ENCODE measurements at regions of chr6 and their contacts with region 1.

Region 1: DNA sequence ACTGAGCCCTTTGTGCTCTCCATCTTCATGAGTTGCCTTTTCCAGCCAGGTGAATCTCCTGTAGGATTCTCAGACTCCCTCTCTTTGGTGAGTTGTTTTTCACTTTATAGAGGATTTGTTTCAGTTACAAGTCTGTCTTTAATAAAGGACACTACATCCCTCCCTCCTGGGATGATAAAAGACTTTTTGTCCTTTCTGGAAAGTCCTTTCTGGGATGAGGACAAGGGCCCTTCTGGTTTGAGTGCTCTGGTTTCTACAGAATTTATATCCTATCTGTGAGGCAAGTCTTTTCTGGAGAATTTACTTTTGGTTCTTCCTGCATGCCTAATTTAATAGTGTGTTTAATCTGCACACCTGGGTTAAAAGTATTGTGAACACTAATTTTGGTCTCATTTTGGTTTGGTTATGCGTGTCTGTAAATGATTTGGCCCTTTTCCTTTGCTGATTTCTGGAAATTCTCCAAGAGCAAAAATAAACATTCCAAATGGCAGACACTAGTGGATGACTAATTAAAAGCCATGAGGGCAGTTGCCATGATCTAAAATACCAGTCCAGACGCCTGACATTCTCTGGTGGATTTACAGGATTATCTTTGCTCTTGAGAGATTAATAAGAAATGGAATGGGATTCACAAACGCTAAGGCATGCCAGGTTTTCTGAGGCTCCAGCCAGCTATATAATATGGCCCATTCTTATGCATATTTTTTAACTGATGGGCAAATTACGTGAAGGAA is 44.8 kb downstream of the TCP11 start:
- DNase-seq: no peak
- H3K4me3 ChIP-seq: no peak overlapping the region
- H3K27ac ChIP-seq: peak overlapping the region in 31 of 59 donors; percentile 2 to 60 (median 24)
- H3K27me3 ChIP-seq: no peaks in the 10 kb centered on the region
- CTCF ChIP-seq: no peak

Region 2: DNA sequence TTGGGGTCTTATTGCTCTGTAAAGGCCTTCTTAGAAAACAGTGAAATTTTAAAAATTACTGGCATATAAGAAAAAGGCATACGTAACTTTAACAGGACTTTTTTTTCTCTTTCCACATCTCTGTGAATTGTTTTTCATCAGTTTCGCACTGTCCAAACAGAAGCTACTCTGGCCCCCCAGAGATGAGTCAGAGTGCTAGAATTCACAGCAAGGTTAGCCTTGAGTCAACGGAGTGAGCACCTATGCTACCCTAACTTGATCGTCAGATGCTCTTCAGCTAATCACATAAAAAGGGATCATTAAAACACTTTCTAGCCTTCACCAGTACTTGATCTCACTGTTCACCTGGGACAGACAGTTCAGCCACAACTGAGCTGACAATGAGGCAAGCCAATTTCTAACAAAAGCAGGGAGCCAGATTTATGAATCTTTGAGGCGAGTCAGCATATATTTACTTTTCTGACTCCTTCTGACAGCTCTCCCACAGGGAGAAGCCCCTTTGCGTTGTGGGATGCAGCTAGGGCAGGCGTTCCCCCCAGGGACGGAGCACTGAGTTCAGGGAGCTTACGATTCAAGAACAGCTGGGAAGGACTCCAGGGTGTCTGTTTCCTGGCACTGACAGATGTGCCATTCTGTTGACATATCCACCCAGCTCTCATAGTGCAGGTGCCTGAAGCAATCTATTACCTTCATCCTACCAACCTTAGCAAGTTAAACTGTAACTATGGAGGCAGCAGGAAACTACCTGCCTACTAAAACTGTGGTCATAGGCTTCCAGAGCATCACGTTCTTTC is 493.8 kb before region 1 on chr6:
- intact Hi-C with region 1: no loop called
- DNase-seq: no peak
- H3K4me3 ChIP-seq: no peak overlapping the region
- H3K27ac ChIP-seq: peak overlapping the region in 11 of 59 donors; percentile 5 to 94 (median 22)
- H3K27me3 ChIP-seq: no peaks in the 10 kb centered on the region
- CTCF ChIP-seq: no peak

Region 3: GRCh38 chr6:34887753-34888513 is 208.4 kb before region 1 on chr6 and contains the start of gene TAF11:
- intact Hi-C with region 1: no loop called
- DNase-seq: peak; percentile 89 to 94 (median 93)
- H3K4me3 ChIP-seq: peak within 1 kb of the TSS; percentile 57 to 100 (median 89)
- H3K27ac ChIP-seq: peak within 1 kb of the TSS; percentile 18 to 94 (median 84)
- H3K27me3 ChIP-seq: no peaks in the 10 kb centered on the region
- CTCF ChIP-seq: peak in 19 of 56 donors; percentile 8 to 43 (median 24)
- total RNA-seq, gene TAF11: 14.9 to 28.0 (median 20.9) TPM

Region 4: DNA sequence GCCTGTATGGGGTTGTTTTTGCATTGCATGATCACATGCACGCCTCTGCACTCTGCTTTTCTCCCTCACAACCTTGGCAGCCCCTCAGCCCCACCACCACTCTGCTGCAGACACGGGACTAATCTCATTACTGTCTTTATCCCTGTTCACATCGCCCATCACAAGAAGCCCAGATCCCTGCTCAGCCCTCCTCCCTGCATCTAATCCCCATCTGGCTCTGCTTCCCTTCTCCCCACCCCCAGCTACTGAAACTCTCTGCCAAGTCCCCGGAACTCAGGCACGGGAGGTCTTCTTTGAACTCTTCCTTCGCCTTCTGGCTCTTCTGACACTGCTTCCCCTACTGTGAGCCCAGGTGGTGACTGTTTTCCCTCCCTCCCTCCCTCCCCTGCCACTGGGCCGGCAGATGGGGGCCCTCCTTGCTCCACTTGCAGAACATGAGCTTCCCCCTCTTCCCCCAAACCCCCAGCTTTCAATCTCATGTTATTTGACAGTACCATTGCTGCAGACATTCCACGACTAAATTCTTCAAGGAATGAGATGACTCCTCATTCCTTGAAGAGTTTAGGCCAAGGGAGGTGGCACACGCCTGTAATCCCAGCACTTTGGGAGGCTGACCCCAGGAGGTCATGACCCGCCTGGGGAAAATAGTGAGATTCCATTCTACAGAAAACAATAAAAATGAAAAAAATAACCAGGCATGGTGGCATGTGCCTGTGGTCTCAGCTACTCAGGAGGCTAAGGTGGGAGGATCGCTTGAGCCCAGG is 438.3 kb after region 1 on chr6:
- intact Hi-C with region 1: loop called in 1 of 2 experiments (anchors 10 kb)
- DNase-seq: no peak
- H3K4me3 ChIP-seq: no peak overlapping the region
- H3K27ac ChIP-seq: no peak overlapping the region
- H3K27me3 ChIP-seq: peaks cover 0 to 3% (median 0%) of the 10 kb centered on the region in 45 donors
- CTCF ChIP-seq: no peak